ENCODE measurements at regions of chr2 and their contacts with region 1.

Region 1: DNA sequence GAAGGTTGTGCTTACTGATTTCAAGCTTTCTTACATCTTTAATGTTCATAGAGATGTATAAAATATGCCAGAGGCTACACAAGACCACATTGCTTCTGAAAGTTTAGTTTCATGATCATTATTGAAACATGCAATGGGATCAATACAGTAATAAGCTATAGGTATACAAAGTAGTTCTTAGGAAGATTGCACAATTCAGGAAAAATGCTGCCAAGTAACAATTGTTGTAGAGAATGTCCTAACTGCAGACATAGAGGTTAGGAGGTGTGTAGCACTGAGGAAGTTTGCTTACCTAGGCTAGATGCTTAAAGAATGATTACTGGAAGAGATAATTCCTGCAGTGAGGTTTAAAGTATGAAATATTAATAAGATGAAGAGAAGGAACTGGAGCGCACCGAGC is 259.5 kb upstream of the CYRIA start:
- DNase-seq: no peak
- H3K4me3 ChIP-seq: no peak overlapping the region
- H3K27ac ChIP-seq: no peak overlapping the region
- H3K4me1 ChIP-seq: no peaks in the 10 kb centered on the region
- H3K27me3 ChIP-seq: no peaks in the 10 kb centered on the region
- CTCF ChIP-seq: no peak
- EP300 ChIP-seq: no peak
- POLR2A ChIP-seq: no peak

Region 2: DNA sequence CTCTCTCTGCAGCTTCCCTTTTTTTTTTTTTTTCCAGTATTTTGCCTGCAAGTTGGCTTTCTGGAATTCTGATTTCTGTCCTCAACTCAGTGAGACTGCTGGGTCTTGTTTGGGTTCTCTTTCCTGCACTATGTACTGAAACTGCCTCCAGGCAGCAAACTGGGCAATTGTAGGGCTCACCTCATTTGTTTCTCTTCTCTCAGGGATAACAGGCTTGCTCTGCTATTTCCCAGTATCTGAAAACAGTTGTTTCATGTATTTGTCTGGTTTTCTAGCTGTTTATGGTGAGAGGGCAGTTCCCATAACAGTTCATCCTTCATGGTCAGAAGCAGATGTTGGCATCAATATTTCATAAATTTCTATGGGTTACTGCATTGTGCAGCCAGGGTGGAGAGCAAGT is 465.5 kb before region 1 on chr2:
- in situ Hi-C with region 1: no loop called
- intact Hi-C with region 1: loop called (anchors 5 kb)
- DNase-seq: no peak
- H3K4me3 ChIP-seq: no peak overlapping the region
- H3K27ac ChIP-seq: no peak overlapping the region
- H3K4me1 ChIP-seq: no peaks in the 10 kb centered on the region
- H3K27me3 ChIP-seq: no peaks in the 10 kb centered on the region
- CTCF ChIP-seq: no peak
- EP300 ChIP-seq: no peak
- POLR2A ChIP-seq: no peak